Dendritic cell treated with granulocyte-macrophage colony-stimulating factor and Interleukin-4, amounts not matched to agents 40 ng/mL and 50 ng/mL, for 4 days (primary cell): ENCODE measurements at regions of chr17 and their contacts with region 1.

Region 1: GRCh38 chr17:81484195-81484979 is 28.2 kb downstream of the ACTG1 start:
- H3K4me3 Mint-ChIP-seq: peak overlapping the region; percentile 51
- H3K27ac Mint-ChIP-seq: no peak overlapping the region
- H3K4me1 Mint-ChIP-seq: peaks cover 35% of the 10 kb centered on the region
- H3K27me3 Mint-ChIP-seq: peaks cover 55% of the 10 kb centered on the region

Region 2: GRCh38 chr17:81401723-81402529 is 82.5 kb before region 1 on chr17:
- intact Hi-C with region 1: loop called (anchors 5 kb)
- H3K4me3 Mint-ChIP-seq: peak overlapping the region; percentile 85
- H3K27ac Mint-ChIP-seq: peak overlapping the region; percentile 95
- H3K4me1 Mint-ChIP-seq: peaks cover 48% of the 10 kb centered on the region
- H3K27me3 Mint-ChIP-seq: peaks cover 11% of the 10 kb centered on the region